Activated CD8-positive, alpha-beta T cell treated with anti-CD3 and anti-CD28 coated beads, Interleukin-2, amount 10 ng/mL, durations not matched to agents 7 days and 5 days (primary cell): ENCODE measurements at regions of chr15 and their contacts with region 1.

Region 1: DNA sequence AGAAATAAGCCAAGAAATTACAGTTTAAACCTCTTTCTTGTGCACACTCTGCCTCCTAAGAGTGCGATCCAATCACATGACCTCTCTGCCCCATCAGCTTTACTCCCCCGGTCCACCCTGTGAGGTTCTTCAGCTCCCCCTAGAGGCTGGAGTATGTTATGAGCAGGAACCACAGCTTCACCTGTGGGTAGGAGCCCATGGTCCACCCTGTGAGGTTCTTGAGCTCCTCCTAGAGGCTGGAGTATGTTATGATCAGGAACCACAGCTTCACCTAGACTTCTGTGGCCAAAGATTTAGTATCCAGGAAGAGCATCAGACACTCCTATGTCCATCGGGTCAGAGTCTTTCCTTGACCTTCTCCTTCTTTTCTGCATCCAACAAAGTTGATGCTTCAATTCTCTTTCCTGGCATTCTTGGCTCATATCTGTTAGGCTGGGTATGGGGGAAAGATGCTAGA is 163.9 kb downstream of the MINAR1 start:
- DNase-seq: peak; percentile 76
- ATAC-seq: peak; percentile 99
- H3K4me3 Mint-ChIP-seq: no peak overlapping the region
- H3K27ac Mint-ChIP-seq: no peak overlapping the region
- H3K4me1 Mint-ChIP-seq: no peaks in the 10 kb centered on the region
- H3K27me3 Mint-ChIP-seq: peaks cover 9% of the 10 kb centered on the region

Region 2: GRCh38 chr15:79339564-79340314 is 256.3 kb before region 1 on chr15:
- CTCF ChIA-PET with region 1: interaction called, 29 read pairs
- POLR2A ChIA-PET with region 1: no interaction called
- DNase-seq: no peak
- ATAC-seq: no peak
- H3K4me3 Mint-ChIP-seq: no peak overlapping the region
- H3K27ac Mint-ChIP-seq: no peak overlapping the region
- H3K4me1 Mint-ChIP-seq: no peaks in the 10 kb centered on the region
- H3K27me3 Mint-ChIP-seq: no peaks in the 10 kb centered on the region

Region 3: GRCh38 chr15:79582650-79583049 is 13.4 kb before region 1 on chr15:
- CTCF ChIA-PET with region 1: interaction called, 27 read pairs
- POLR2A ChIA-PET with region 1: interaction called, 3 read pairs
- DNase-seq: no peak
- ATAC-seq: no peak
- H3K4me3 Mint-ChIP-seq: no peak overlapping the region
- H3K27ac Mint-ChIP-seq: no peak overlapping the region
- H3K4me1 Mint-ChIP-seq: no peaks in the 10 kb centered on the region
- H3K27me3 Mint-ChIP-seq: peaks cover 24% of the 10 kb centered on the region

Region 4: DNA sequence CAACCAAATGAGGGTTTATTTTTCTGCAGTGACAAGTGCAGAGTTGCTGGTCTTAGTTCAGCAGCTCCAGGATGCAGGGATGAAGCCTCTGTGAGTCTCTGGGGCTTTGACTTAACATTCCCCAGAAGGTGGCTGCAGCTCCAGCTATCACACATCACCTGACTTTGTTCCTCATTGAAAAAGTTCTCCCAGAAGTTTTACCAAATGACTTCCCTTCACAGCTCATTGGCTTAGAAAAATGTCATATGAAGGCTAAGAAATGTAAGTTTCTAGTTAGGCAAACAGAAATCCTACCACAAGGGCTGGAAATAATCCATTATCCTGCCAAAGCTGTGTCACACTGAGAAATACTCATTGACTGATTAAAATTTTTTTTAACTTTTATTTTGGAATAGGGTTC is 21.0 kb after region 1 on chr15:
- CTCF ChIA-PET with region 1: no interaction called
- POLR2A ChIA-PET with region 1: no interaction called
- DNase-seq: no peak
- ATAC-seq: no peak
- H3K4me3 Mint-ChIP-seq: no peak overlapping the region
- H3K27ac Mint-ChIP-seq: no peak overlapping the region
- H3K4me1 Mint-ChIP-seq: no peaks in the 10 kb centered on the region
- H3K27me3 Mint-ChIP-seq: peaks cover 16% of the 10 kb centered on the region

Region 5: GRCh38 chr15:79632457-79632856 is 36.4 kb after region 1 on chr15:
- CTCF ChIA-PET with region 1: no interaction called
- POLR2A ChIA-PET with region 1: no interaction called
- DNase-seq: no peak
- ATAC-seq: no peak
- H3K4me3 Mint-ChIP-seq: no peak overlapping the region
- H3K27ac Mint-ChIP-seq: no peak overlapping the region
- H3K4me1 Mint-ChIP-seq: no peaks in the 10 kb centered on the region
- H3K27me3 Mint-ChIP-seq: peaks cover 16% of the 10 kb centered on the region